K562 (cell line): ENCODE measurements at regions of chr2 and their contacts with region 1.

Region 1: DNA sequence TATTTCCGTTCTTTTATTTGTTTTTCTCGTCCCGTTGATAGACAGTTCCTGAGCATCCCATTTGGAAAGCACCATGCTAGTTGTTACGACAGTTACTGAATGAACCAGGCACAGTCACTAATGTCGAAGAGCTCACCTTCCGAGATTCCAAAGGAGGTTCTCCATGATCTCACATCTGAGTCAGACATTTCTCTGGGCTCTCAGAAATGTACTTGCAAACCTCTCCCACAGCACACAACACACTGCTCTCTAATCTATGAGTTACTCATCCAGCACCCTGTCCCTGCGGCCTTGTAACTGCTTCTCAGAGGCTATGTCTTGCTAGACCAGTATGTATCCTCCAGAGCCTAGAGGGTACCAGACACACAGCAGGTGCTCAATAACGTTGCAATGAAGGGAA is 174.7 kb downstream of the DNER start:
- DNase-seq: no peak
- ATAC-seq: no peak
- H3K4me3 ChIP-seq: no peak overlapping the region
- H3K27ac ChIP-seq: no peak overlapping the region
- H3K4me1 ChIP-seq: no peaks in the 10 kb centered on the region
- H3K27me3 ChIP-seq: no peaks in the 10 kb centered on the region
- CTCF ChIP-seq: no peak
- EP300 ChIP-seq: no peak
- POLR2A ChIP-seq: no peak
- RAD21 ChIP-seq: no peak

Region 2: DNA sequence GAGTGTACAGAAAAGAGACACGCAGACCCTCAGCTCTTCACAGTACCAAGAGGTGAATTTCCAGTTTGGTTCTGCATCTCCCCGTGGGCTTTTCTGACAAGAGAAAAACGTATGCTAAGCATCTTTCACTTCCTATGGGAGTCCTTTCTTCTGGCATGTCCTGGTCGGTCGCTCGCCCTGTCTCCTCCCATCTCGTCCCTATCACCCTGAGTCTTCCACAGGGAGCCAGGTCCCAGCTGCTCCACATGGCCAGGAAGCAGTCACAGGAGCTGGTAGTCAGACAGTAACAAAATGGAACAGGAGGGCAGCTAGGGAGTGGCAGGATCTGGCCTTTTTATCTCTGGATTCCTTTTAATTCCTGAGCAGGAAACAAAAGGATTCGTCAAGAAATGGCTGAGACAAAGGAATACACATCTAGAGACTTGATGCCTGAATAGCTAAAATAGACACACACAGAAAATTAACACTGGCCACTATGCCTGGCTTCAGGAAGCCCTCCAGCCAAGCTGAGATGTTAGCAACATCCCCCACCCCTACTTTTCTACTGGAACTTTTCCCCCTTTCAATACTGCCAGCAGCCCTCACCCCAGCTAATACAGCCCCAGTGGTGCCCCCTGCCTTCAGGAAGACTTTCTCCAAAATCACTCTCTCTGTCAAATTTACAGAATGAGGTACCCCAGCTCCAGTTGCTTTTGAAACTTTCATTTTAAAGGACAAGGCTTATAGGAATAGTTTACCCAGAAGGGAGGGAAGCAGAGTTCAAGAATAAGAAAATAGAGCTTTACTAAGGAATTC is 38.6 kb after region 1 on chr2:
- CTCF ChIA-PET with region 1: no interaction called
- POLR2A ChIA-PET with region 1: no interaction called
- in situ Hi-C with region 1: loop called (anchors 5 kb)
- intact Hi-C with region 1: no loop called
- DNase-seq: no peak
- ATAC-seq: no peak
- H3K4me3 ChIP-seq: no peak overlapping the region
- H3K27ac ChIP-seq: no peak overlapping the region
- H3K4me1 ChIP-seq: no peaks in the 10 kb centered on the region
- H3K27me3 ChIP-seq: no peaks in the 10 kb centered on the region
- CTCF ChIP-seq: no peak
- EP300 ChIP-seq: no peak
- POLR2A ChIP-seq: no peak
- RAD21 ChIP-seq: no peak

Region 3: GRCh38 chr2:229835596-229836283 is 296.1 kb after region 1 on chr2:
- CTCF ChIA-PET with region 1: no interaction called
- POLR2A ChIA-PET with region 1: no interaction called
- in situ Hi-C with region 1: no loop called
- intact Hi-C with region 1: no loop called
- DNase-seq: no peak
- ATAC-seq: no peak
- H3K4me3 ChIP-seq: no peak overlapping the region
- H3K27ac ChIP-seq: no peak overlapping the region
- H3K4me1 ChIP-seq: no peaks in the 10 kb centered on the region
- H3K27me3 ChIP-seq: no peaks in the 10 kb centered on the region
- CTCF ChIP-seq: no peak
- EP300 ChIP-seq: no peak
- POLR2A ChIP-seq: no peak
- RAD21 ChIP-seq: no peak